ENCODE measurements at regions of chr2 and their contacts with region 1.

Region 1: GRCh38 chr2:51795248-51795888 is 763.4 kb upstream of the NRXN1 start:
- DNase-seq: no peak
- ATAC-seq: peak; percentile 57
- H3K4me3 ChIP-seq: no peak overlapping the region
- H3K27ac ChIP-seq: no peak overlapping the region
- H3K4me1 ChIP-seq: no peaks in the 10 kb centered on the region
- H3K27me3 ChIP-seq: no peaks in the 10 kb centered on the region
- CTCF ChIP-seq: peak in 2 of 3 experiments; percentile 32 to 40; a peak in 3 of 6 replicates
- EP300 ChIP-seq: no peak
- POLR2A ChIP-seq: no peak
- RAD21 ChIP-seq: no peak

Region 2: DNA sequence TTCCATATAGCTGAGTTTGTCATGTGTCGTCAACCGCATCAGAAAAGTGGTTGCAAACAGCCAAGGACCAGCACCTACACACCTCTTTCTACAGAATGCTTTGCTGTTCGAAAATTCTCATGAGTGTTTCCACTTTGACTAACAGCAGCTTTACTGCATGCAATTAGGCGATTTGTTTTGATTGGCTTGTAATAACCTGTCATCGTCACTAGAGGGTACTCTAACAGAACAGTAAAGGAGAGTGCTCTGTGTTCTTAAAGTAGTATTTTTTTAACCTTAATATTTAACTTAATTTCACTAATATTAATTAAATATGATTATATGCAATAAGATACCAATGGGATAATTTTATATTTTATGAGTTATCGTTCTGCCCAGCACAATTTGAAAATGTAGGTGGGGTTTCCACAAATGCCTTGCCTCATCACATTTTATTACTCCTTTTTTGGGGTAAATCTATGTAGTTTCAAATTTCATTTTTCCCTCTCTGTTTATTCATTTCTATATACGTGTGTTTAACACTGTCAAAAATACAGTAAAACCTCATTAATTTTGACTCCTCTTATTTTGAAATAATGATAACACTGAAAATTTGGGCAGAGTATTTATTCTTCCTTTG is 1265.7 kb before region 1 on chr2:
- CTCF ChIA-PET with region 1: interaction called, 5 read pairs
- POLR2A ChIA-PET with region 1: no interaction called
- RAD21 ChIA-PET with region 1: no interaction called
- SMC1A ChIA-PET with region 1: interaction called, 12 read pairs
- in situ Hi-C with region 1: no loop called
- intact Hi-C with region 1: loop called (anchors 10 kb)
- DNase-seq: no peak
- ATAC-seq: peak; percentile 86
- H3K4me3 ChIP-seq: no peak overlapping the region
- H3K27ac ChIP-seq: no peak overlapping the region
- H3K4me1 ChIP-seq: no peaks in the 10 kb centered on the region
- H3K27me3 ChIP-seq: no peaks in the 10 kb centered on the region
- CTCF ChIP-seq: peak; percentile 66 to 70 (median 69)
- EP300 ChIP-seq: no peak
- POLR2A ChIP-seq: no peak
- RAD21 ChIP-seq: peak; percentile 65

Region 3: DNA sequence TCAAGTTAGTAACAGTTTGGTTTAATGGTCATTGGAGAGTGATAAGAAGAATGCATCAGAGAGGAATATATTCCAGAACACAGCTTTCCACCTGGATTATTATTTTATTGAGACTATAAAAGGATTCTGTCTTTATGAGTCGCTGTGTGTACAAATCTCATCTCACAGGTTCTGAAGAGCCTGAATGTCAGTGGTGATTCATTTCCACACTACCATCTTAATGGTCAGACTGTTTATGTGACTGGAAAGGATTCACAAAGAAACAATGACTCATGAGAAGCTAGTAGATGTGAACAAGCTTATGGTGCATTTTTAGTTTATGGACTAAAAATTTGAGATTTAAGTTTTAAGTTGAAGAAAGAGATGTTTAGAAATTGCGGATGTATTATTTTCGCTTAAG is 78.1 kb before region 1 on chr2:
- CTCF ChIA-PET with region 1: no interaction called
- POLR2A ChIA-PET with region 1: no interaction called
- RAD21 ChIA-PET with region 1: no interaction called
- SMC1A ChIA-PET with region 1: no interaction called
- in situ Hi-C with region 1: no loop called
- intact Hi-C with region 1: no loop called
- DNase-seq: no peak
- ATAC-seq: no peak
- H3K4me3 ChIP-seq: no peak overlapping the region
- H3K27ac ChIP-seq: no peak overlapping the region
- H3K4me1 ChIP-seq: no peaks in the 10 kb centered on the region
- H3K27me3 ChIP-seq: no peaks in the 10 kb centered on the region
- CTCF ChIP-seq: no peak
- EP300 ChIP-seq: no peak
- POLR2A ChIP-seq: no peak
- RAD21 ChIP-seq: no peak

Region 4: GRCh38 chr2:51812138-51812866 is 16.9 kb after region 1 on chr2:
- CTCF ChIA-PET with region 1: interaction called, 10 read pairs
- POLR2A ChIA-PET with region 1: no interaction called
- RAD21 ChIA-PET with region 1: no interaction called
- SMC1A ChIA-PET with region 1: interaction called, 3 read pairs
- in situ Hi-C with region 1: no loop called
- intact Hi-C with region 1: no loop called
- DNase-seq: no peak
- ATAC-seq: no peak
- H3K4me3 ChIP-seq: no peak overlapping the region
- H3K27ac ChIP-seq: no peak overlapping the region
- H3K4me1 ChIP-seq: no peaks in the 10 kb centered on the region
- H3K27me3 ChIP-seq: no peaks in the 10 kb centered on the region
- CTCF ChIP-seq: no peak
- EP300 ChIP-seq: no peak
- POLR2A ChIP-seq: no peak
- RAD21 ChIP-seq: no peak

Measured in GM12878 (cell line).